ENCODE measurements at regions of chr18 and their contacts with region 1.

Region 1: GRCh38 chr18:46155641-46156051 is 51.5 kb downstream of the HAUS1 start:
- DNase-seq: peak; percentile 67
- H3K4me3 Mint-ChIP-seq: peak overlapping the region; percentile 10
- H3K27ac Mint-ChIP-seq: peak overlapping the region; percentile 94
- H3K4me1 Mint-ChIP-seq: peaks cover 64% of the 10 kb centered on the region
- H3K27me3 Mint-ChIP-seq: no peaks in the 10 kb centered on the region

Region 2: DNA sequence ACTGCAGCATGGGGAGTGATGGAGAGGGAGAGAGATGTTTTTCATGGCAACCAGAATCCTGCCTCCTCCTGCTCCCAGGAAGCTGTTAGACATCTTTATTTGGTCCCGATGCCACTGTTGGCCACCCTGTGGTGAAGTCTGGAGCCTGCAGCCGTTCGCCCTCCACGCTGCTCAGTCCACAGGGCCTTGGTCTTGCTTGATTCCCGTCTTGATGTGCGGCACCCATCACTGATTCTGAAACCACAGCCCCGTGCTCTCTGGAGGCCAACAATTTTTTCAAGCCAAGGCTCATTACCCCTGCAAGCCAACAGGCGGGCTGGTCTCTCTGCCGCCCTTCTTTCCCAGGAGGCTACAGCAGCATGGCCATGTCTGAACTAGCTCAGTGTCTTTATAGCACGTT is 305.6 kb before region 1 on chr18:
- CTCF ChIA-PET with region 1: no interaction called
- POLR2A ChIA-PET with region 1: no interaction called
- intact Hi-C with region 1: no loop called
- DNase-seq: no peak
- H3K4me3 Mint-ChIP-seq: no peak overlapping the region
- H3K27ac Mint-ChIP-seq: no peak overlapping the region
- H3K4me1 Mint-ChIP-seq: no peaks in the 10 kb centered on the region
- H3K27me3 Mint-ChIP-seq: no peaks in the 10 kb centered on the region

Region 3: DNA sequence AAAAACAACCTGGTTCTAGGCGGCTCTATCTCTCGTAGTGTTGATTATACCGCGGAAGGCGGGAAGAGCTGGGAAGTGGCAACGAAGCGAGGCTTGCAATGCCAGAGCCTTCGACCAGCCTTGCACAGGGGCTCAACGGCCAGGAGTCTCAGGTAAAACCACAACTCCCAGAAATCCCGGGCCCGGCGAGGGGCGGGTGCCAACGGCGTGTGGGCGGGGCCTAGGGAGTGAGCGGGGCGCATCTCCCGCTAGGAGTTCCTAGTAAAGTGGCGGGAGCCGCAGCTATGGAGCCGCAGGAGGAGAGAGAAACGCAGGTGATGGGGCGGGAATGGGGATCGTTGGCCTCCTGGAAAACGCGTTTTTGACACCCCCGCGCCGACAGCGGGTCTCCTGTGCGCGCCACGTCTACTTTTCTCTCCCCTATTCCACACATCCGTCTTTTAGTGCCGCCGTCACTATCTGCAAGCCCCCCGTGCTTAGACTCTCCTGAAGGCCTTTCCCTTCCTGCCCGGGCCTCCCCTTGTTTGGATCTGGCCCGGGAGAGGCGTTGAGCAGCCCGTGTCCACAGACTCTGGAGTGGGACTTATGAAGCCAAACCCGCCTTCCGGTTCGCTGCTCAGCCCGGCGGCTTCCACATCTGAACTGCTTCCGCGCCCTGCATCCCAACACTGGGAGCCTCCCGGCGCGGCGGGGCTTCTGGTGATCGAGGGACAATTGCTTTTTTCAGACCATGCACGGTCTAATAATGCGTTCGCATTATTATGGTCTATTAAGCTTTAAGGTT is 51.3 kb before region 1 on chr18 and contains the start of gene HAUS1:
- CTCF ChIA-PET with region 1: no interaction called
- POLR2A ChIA-PET with region 1: no interaction called
- intact Hi-C with region 1: loop called (anchors 2 kb)
- DNase-seq: peak; percentile 90
- H3K4me3 Mint-ChIP-seq: peak within 1 kb of the TSS; percentile 99
- H3K27ac Mint-ChIP-seq: peak within 1 kb of the TSS; percentile 89
- H3K4me1 Mint-ChIP-seq: peaks cover 29% of the 10 kb centered on the region
- H3K27me3 Mint-ChIP-seq: no peaks in the 10 kb centered on the region
- total RNA-seq, gene HAUS1: 57.4 to 65.5 TPM

Region 4: GRCh38 chr18:46213295-46213694 is 57.6 kb after region 1 on chr18:
- CTCF ChIA-PET with region 1: interaction called, 3 read pairs
- POLR2A ChIA-PET with region 1: no interaction called
- intact Hi-C with region 1: loop called (anchors 1 kb)
- DNase-seq: no peak
- H3K4me3 Mint-ChIP-seq: no peak overlapping the region
- H3K27ac Mint-ChIP-seq: no peak overlapping the region
- H3K4me1 Mint-ChIP-seq: peaks cover 86% of the 10 kb centered on the region
- H3K27me3 Mint-ChIP-seq: no peaks in the 10 kb centered on the region

Measured in activated CD4-positive, alpha-beta memory T cell treated with anti-CD3 and anti-CD28 coated beads for 36 hours (primary cell).